ENCODE measurements at regions of chr17 and their contacts with region 1.

Region 1: GRCh38 chr17:2054512-2055291 is at the start of gene HIC1:
- DNase-seq: peak; percentile 85
- ATAC-seq: peak; percentile 39
- H3K4me3 Mint-ChIP-seq: peak within 1 kb of the TSS; percentile 69
- H3K27ac Mint-ChIP-seq: no peak within 1 kb of the TSS
- H3K4me1 Mint-ChIP-seq: peaks cover 36% of the 10 kb centered on the region
- H3K27me3 Mint-ChIP-seq: peaks cover 11% of the 10 kb centered on the region
- CTCF ChIP-seq: peak; percentile 71
- total RNA-seq, gene HIC1: 8.3 and 9.3 TPM in 2 replicates

Region 2: DNA sequence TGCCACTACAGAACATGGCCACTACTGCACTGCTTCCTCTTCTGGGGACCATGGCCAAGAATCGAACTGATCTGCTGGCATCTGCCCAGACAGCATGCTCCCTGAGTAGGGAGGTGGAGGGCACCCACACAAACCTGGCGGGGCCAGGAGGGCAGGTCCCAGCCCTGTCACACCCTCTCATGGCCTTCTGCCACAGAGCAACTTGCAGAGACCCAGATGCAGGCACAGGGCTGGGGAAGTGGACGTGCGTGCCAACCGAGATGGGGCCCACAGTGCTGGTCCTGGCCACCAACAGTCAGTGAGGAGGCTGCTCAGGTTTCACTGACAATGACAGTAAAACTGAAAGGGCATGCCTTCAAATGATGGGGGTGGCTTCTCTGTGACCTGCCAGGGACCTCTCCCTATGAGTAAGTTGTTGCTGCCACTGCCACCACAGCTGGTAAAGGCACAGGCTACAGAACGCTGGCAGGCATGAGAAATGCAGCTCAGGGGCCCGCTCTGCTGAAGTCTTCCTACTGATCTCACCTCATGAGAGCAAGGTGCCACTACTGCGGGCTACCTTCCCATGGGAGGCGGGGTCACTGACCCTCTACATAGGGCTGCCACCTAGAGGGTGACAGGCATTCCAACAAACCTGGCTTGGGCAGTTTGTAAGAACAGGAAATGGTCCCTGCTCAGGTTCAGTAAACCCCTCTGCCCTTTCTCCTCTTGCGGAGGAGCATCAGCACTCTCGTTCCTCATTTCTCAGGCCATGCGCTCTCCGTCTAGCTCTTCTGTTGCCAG is 15.7 kb after region 1 on chr17:
- CTCF ChIA-PET with region 1: interaction called, 21 read pairs
- POLR2A ChIA-PET with region 1: interaction called, 7 read pairs
- intact Hi-C with region 1: loop called (anchors 1 kb)
- DNase-seq: no peak
- ATAC-seq: peak; percentile 90
- H3K4me3 Mint-ChIP-seq: peak overlapping the region; percentile 59
- H3K27ac Mint-ChIP-seq: peak overlapping the region; percentile 79
- H3K4me1 Mint-ChIP-seq: peaks cover 43% of the 10 kb centered on the region
- H3K27me3 Mint-ChIP-seq: no peaks in the 10 kb centered on the region
- CTCF ChIP-seq: no peak

Region 3: GRCh38 chr17:2094891-2095535 is 40.3 kb after region 1 on chr17:
- CTCF ChIA-PET with region 1: interaction called, 98 read pairs
- POLR2A ChIA-PET with region 1: interaction called, 449 read pairs
- intact Hi-C with region 1: loop called (anchors 5 kb)
- DNase-seq: no peak
- ATAC-seq: peak; percentile 53
- H3K4me3 Mint-ChIP-seq: no peak overlapping the region
- H3K27ac Mint-ChIP-seq: no peak overlapping the region
- H3K4me1 Mint-ChIP-seq: peaks cover 18% of the 10 kb centered on the region
- H3K27me3 Mint-ChIP-seq: no peaks in the 10 kb centered on the region
- CTCF ChIP-seq: no peak

Region 4: DNA sequence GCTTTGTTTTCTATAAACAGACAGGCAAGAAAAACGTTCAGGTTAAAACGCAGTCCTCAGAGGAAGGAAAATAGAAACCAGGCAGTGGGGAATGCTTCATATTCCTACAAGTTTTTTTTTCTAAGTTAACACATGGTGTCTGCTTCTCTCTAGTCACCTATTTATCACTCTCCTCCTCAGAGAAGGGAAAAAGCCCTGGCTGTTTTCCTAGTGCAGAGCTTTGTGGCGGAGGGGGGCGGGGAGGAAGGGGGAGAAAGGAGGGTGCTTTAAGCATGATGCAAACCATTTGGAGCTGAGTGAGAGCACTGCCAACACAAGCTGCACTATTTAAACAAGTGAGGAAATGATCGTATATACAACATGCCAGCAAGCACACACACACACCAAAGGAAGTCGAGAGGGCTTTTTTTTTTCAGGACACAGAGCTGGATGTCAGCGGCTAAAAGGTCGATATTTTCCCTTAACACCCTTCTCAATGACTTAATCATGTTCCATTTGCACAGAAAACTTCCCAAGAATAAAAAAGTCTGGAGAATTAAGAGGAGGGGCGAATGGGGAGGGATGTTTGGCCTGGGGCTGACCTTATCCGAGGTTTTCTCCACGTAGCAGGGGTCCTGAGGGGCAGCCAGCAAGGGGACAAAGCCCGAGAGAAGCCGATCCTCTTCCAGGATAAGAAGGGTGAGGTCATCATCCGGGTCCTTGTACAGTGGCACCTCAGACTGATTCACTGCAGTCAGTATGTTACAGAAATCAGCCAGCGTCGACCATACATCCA is 117.6 kb after region 1 on chr17:
- CTCF ChIA-PET with region 1: interaction called, 89 read pairs
- POLR2A ChIA-PET with region 1: interaction called, 4 read pairs
- intact Hi-C with region 1: loop called (anchors 1 kb)
- DNase-seq: no peak
- ATAC-seq: no peak
- H3K4me3 Mint-ChIP-seq: no peak overlapping the region
- H3K27ac Mint-ChIP-seq: no peak overlapping the region
- H3K4me1 Mint-ChIP-seq: no peaks in the 10 kb centered on the region
- H3K27me3 Mint-ChIP-seq: no peaks in the 10 kb centered on the region
- CTCF ChIP-seq: no peak

Region 5: GRCh38 chr17:2244545-2245525 is 190.1 kb after region 1 on chr17:
- CTCF ChIA-PET with region 1: interaction called, 228 read pairs
- POLR2A ChIA-PET with region 1: interaction called, 33 read pairs
- intact Hi-C with region 1: loop called (anchors 1 kb)
- DNase-seq: peak; percentile 70
- ATAC-seq: peak; percentile 72
- H3K4me3 Mint-ChIP-seq: no peak overlapping the region
- H3K27ac Mint-ChIP-seq: no peak overlapping the region
- H3K4me1 Mint-ChIP-seq: peaks cover 14% of the 10 kb centered on the region
- H3K27me3 Mint-ChIP-seq: no peaks in the 10 kb centered on the region
- CTCF ChIP-seq: peak; percentile 44

Region 6: GRCh38 chr17:2336215-2336851 is 281.6 kb after region 1 on chr17 and contains the start of gene TSR1:
- CTCF ChIA-PET with region 1: no interaction called
- POLR2A ChIA-PET with region 1: no interaction called
- intact Hi-C with region 1: loop called (anchors 2 kb)
- DNase-seq: peak; percentile 85
- ATAC-seq: peak; percentile 79
- H3K4me3 Mint-ChIP-seq: peak within 1 kb of the TSS; percentile 99
- H3K27ac Mint-ChIP-seq: peak within 1 kb of the TSS; percentile 96
- H3K4me1 Mint-ChIP-seq: peaks cover 23% of the 10 kb centered on the region
- H3K27me3 Mint-ChIP-seq: no peaks in the 10 kb centered on the region
- CTCF ChIP-seq: no peak
- total RNA-seq, gene TSR1: 46.4 and 48.5 TPM in 2 replicates